Heart left ventricle (tissue), 16 donors: ENCODE measurements at regions of chr12 and their contacts with region 1.

Region 1: DNA sequence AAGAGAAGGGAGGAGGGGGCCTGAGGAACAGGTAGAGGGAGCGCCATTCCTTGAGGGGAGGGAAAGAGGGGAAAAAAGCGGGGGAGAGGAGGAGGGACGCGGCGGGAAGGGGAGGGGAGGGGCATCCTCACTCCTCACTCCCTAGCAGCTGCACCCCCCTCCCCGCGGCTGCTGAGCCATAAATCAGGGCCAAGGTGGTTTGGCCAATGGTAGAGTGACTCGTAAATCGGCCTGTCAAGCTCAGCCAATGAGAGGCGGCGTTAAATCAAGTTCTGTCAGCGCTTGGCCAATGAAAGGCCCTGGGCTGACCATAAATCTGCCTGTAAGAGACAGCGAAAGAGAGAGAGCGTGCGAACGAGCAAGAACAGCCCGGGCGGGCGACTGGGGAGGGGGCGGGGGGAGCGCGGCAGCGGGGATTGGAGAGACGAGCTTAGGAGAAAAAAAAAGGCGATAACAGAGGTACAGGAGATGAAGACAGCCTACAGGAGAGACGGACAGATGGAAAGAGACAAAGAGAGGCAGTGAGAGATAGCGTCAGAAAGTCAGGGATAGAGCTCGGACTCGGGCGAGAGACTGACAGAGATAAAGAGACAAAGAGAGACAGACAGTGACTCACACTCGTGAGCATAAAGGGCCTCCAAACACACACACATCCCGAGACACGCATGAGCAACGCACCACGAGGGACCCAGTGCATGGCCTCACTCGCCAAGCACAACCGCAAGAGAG is 5.1 kb downstream of the GPR84 start:
- DNase-seq: peak; percentile 95 to 98 (median 97)
- ATAC-seq: peak; percentile 95 to 97 (median 97)
- H3K4me3 ChIP-seq: peak overlapping the region; percentile 24 to 86 (median 68)
- H3K27ac ChIP-seq: peak overlapping the region; percentile 53 to 96 (median 90)
- H3K4me1 ChIP-seq: peaks cover 0 to 43% (median 13%) of the 10 kb centered on the region in 12 donors
- H3K27me3 ChIP-seq: no peaks in the 10 kb centered on the region
- CTCF ChIP-seq: no peak
- POLR2A ChIP-seq: peak in 1 of 2 donors; percentile 56

Region 2: DNA sequence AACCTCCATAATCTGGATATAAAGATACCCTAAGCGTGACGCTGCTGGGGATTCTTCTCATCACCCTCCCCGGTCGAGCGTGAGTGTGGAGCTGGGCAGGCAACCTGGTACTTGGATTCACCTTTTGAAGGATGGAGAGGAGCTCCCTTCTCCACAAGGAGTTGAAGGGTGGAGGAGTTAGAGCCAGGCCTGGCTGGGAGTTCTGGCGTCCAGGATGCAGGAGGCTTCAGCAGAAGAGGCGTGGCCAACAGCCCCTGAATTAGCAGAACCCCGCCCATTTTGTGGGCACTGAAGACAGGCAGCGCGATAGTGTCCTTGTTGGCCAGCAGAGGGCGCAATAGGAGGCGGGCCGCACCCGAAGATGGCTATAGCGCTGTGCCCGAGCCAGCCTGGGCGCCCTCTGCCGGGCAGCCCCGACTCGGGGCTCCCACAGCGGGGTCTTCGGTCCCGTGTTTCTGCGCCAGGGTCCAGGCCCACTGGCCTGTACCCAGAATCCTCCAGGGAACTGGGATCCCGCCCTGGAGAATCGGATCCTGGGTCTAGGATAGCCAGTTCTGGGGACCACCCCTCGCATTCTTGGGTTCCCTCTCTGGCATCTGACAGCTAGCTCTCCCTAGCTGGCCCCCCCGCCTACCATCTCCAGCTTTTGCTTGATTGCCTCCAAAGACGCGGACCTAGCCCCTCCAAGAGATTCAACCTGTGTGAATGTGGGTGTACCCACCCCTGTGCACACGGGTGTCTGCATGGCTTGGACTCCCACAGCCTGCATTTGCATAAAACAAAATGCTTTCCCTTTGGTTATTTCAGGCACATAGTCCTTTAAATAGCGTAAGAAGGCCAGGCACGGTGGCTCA is 144.4 kb before region 1 on chr12:
- intact Hi-C with region 1: loop called in 2 of 10 experiments (anchors 1 to 5 kb)
- DNase-seq: peak; percentile 86 to 91 (median 89)
- ATAC-seq: peak; percentile 77 to 91 (median 86)
- H3K4me3 ChIP-seq: peak overlapping the region in 6 of 12 donors; percentile 18 to 47 (median 33)
- H3K27ac ChIP-seq: no peak overlapping the region
- H3K4me1 ChIP-seq: peaks cover 9 to 38% (median 21%) of the 10 kb centered on the region in 12 donors
- H3K27me3 ChIP-seq: peaks cover 0 to 40% (median 27%) of the 10 kb centered on the region in 9 donors
- CTCF ChIP-seq: peak; percentile 94 to 100 (median 96)
- POLR2A ChIP-seq: no peak

Region 3: DNA sequence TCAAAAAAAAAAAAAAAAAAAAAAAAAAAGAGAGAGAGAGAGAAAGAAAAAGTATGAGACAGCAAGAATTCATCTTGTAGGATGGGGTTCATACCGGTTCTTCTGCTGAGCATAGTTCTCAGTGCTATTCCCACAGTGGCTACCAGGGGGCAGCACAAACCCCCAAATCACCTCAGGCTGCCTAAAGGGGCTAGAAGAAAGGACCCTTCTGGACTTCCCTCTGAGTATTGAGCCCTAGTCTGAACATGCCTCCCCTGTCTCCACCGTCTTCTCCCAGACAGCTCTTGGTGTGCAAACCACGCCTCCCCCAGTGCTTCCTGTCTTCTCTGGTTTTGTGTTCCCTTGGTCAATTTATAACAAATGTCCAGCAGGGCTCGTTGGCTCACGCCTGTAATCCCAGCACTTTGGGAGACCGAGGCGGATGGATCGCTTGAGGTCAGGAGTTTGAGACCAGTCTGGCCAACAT is 139.1 kb before region 1 on chr12:
- intact Hi-C with region 1: loop called in 9 of 10 experiments (anchors 1 to 5 kb)
- DNase-seq: peak in 4 of 5 donors; percentile 49 to 66 (median 56)
- ATAC-seq: peak in 3 of 4 donors; percentile 62 to 72 (median 72)
- H3K4me3 ChIP-seq: peak overlapping the region in 1 of 12 donors; percentile 7
- H3K27ac ChIP-seq: no peak overlapping the region
- H3K4me1 ChIP-seq: peaks cover 8 to 34% (median 19%) of the 10 kb centered on the region in 12 donors
- H3K27me3 ChIP-seq: peaks cover 0 to 18% (median 3%) of the 10 kb centered on the region in 9 donors
- CTCF ChIP-seq: peak; percentile 69 to 88 (median 75)
- POLR2A ChIP-seq: no peak

Region 4: GRCh38 chr12:54279866-54280467 is 79.2 kb before region 1 on chr12 and contains the start of gene CBX5:
- intact Hi-C with region 1: loop called in 3 of 10 experiments (anchors 5 to 10 kb)
- DNase-seq: peak; percentile 99 to 100 (median 99)
- ATAC-seq: peak; percentile 70 to 82 (median 77)
- H3K4me3 ChIP-seq: peak within 1 kb of the TSS; percentile 61 to 93 (median 79)
- H3K27ac ChIP-seq: peak within 1 kb of the TSS; percentile 82 to 99 (median 94)
- H3K4me1 ChIP-seq: peaks cover 9 to 60% (median 50%) of the 10 kb centered on the region in 12 donors
- H3K27me3 ChIP-seq: no peaks in the 10 kb centered on the region
- CTCF ChIP-seq: no peak
- POLR2A ChIP-seq: no peak
- total RNA-seq, gene CBX5: 22.3 to 59.5 (median 49.4) TPM

Region 5: DNA sequence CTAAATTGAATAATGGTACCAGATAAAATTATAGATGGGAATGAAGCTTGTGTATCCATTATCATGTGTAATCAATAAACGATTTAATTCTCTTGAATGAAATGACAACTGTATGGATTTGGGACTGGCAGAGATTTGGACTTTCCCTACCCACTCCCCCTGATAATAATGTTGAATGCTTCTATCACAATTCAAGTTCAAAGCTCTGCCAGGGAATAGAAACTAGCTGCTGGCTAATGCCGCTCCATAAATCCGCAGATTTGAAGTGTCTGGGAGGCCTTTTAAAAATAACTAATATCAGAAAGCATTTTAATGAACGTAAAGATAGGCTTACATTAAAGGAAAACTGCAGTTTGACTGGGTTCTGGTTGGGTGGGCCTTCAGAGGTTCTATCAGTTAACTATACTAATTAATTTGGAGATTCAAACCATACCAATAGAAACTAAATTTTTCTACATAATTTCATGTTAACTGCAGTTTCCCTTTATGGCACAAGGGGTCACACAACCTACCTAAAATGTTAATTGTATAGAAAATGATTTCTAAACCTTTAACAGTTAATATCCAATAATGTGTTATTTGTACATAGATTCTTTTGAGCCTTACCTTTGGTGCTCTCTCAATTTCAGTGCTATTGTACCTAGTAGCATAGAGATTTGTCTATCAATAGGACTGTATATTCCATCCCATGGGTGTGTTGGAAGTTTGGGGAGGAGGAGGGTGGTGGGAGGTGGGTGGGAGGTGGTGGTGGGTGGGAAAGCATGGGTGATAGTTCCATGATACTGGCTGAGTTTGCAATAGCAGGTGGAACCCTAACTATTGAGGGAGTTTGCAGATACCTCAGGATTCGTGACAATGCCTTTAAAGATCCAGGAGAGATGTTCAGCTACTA is 73.8 kb before region 1 on chr12:
- intact Hi-C with region 1: loop called in 8 of 10 experiments (anchors 5 to 10 kb)
- DNase-seq: no peak
- ATAC-seq: no peak
- H3K4me3 ChIP-seq: peak overlapping the region in 2 of 12 donors; percentile 1 to 91
- H3K27ac ChIP-seq: peak overlapping the region in 2 of 12 donors; percentile 15 to 44
- H3K4me1 ChIP-seq: peaks cover 9 to 72% (median 55%) of the 10 kb centered on the region in 12 donors
- H3K27me3 ChIP-seq: no peaks in the 10 kb centered on the region
- CTCF ChIP-seq: peak in 4 of 12 donors; percentile 8 to 32 (median 18)
- POLR2A ChIP-seq: no peak

Region 6: DNA sequence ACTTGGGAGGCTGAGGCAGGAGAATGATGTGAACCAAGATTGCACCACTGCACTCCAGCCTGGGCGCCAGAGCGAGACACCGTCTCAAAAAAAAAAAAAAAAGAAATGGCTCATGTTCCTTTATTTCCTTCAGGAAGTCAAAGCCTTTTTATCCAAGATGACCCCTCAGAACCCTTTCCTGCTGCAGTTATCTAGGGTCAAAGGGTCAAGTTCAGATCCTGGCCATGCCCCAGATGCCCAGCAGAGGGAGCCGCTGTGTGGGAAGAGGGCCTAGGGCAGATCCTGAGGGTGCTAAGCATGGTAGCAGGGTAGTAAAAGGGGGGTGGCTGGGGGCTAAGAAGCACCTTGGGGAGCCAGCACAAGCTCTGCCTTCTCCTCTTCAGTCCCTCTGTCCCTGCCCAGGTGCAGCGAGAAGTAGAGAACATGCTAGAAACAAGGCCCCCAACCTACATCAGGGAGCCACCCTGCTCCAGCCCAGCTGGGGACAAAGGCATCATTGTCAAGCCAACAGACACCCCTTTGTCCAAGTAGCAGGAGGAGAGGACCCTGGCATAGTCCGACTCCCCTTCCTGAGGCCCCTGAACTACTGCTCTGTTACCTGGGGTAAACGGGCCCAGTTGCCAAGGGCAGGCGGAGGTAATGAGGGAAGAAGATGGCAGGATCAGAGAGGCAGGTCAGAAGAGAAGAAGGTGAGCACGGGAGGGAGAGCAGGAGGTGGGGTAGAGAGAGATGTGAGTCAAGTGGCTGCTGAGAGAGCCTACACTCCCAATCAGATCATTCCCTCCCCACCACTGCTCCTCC is 64.8 kb before region 1 on chr12:
- intact Hi-C with region 1: loop called in 7 of 10 experiments (anchors 5 to 10 kb)
- DNase-seq: peak; percentile 35 to 74 (median 43)
- ATAC-seq: peak in 3 of 4 donors; percentile 51 to 65 (median 61)
- H3K4me3 ChIP-seq: no peak overlapping the region
- H3K27ac ChIP-seq: no peak overlapping the region
- H3K4me1 ChIP-seq: peaks cover 0 to 40% (median 0%) of the 10 kb centered on the region in 12 donors
- H3K27me3 ChIP-seq: peaks cover 0 to 10% (median 4%) of the 10 kb centered on the region in 9 donors
- CTCF ChIP-seq: peak; percentile 45 to 68 (median 54)
- POLR2A ChIP-seq: no peak